CD14-positive monocyte (primary cell): ENCODE measurements at regions of chr16 and their contacts with region 1.

Region 1: GRCh38 chr16:69310653-69311532 is at the start of gene VPS4A:
- DNase-seq: peak; percentile 95 to 97 (median 96)
- H3K4me3 ChIP-seq: peak within 1 kb of the TSS; percentile 66 to 78 (median 78)
- H3K4me3 Mint-ChIP-seq: peak within 1 kb of the TSS; percentile 98 to 100
- H3K27ac ChIP-seq: peak within 1 kb of the TSS; percentile 70 to 93
- H3K27ac Mint-ChIP-seq: peak within 1 kb of the TSS; percentile 88 to 96 (median 95)
- H3K4me1 ChIP-seq: peaks cover 13 to 14% of the 10 kb centered on the region in 2 donors
- H3K4me1 Mint-ChIP-seq: peaks cover 15% of the 10 kb centered on the region
- H3K27me3 ChIP-seq: no peaks in the 10 kb centered on the region
- H3K27me3 Mint-ChIP-seq: peaks cover 1 to 10% (median 5%) of the 10 kb centered on the region in 3 donors
- CTCF ChIP-seq: peak; percentile 82
- polyA plus RNA-seq, gene VPS4A: 18.2 to 25.7 (median 21.8) TPM

Region 2: DNA sequence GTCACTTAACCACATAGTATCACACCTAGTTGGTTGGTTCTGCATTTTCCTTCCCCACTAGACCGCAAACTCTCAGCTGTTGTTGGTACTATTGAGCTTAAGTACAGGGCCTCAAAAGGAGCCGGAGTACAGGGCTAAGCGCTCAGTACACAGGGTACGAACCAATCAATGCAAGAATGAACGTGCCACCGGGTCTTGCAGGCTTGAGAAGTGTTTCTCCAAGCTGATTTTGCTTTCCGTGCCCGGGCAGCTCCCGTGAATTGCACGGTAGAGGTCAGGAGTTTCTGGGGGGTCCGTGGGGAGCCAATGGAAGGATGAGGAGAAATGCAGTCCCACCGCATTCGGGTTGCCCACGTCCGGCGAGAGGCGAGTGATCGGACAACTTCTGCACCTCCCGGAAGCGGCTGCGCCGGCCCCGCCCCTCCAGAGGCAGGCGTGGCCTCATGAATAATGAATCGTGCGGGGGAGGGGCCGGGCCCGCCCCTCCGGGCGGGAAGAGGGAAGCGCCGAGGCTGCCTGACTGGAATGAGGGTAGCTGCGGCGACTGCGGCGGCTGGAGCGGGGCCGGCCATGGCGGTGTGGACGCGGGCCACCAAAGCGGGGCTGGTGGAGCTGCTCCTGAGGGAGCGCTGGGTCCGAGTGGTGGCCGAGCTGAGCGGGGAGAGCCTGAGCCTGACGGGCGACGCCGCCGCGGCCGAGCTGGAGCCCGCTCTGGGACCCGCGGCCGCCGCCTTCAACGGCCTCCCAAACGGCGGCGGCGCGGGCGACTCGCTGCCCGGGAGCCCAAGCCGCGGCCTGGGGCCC is 124.0 kb before region 1 on chr16 and contains the start of gene SNTB2:
- intact Hi-C with region 1: loop called in 1 of 2 experiments (anchors 5 kb)
- DNase-seq: peak; percentile 74 to 87 (median 75)
- H3K4me3 ChIP-seq: peak within 1 kb of the TSS; percentile 65 to 84 (median 75)
- H3K4me3 Mint-ChIP-seq: peak within 1 kb of the TSS; percentile 96 to 98
- H3K27ac ChIP-seq: peak within 1 kb of the TSS; percentile 22 to 80
- H3K27ac Mint-ChIP-seq: peak within 1 kb of the TSS; percentile 89 to 96 (median 93)
- H3K4me1 ChIP-seq: peaks cover 28 to 35% of the 10 kb centered on the region in 2 donors
- H3K4me1 Mint-ChIP-seq: peaks cover 34% of the 10 kb centered on the region
- H3K27me3 ChIP-seq: peaks cover 22 to 34% of the 10 kb centered on the region in 2 donors
- H3K27me3 Mint-ChIP-seq: peaks cover 30 to 67% (median 35%) of the 10 kb centered on the region in 3 donors
- CTCF ChIP-seq: no peak
- polyA plus RNA-seq, gene SNTB2: 1.2 to 6.0 (median 5.0) TPM

Region 3: DNA sequence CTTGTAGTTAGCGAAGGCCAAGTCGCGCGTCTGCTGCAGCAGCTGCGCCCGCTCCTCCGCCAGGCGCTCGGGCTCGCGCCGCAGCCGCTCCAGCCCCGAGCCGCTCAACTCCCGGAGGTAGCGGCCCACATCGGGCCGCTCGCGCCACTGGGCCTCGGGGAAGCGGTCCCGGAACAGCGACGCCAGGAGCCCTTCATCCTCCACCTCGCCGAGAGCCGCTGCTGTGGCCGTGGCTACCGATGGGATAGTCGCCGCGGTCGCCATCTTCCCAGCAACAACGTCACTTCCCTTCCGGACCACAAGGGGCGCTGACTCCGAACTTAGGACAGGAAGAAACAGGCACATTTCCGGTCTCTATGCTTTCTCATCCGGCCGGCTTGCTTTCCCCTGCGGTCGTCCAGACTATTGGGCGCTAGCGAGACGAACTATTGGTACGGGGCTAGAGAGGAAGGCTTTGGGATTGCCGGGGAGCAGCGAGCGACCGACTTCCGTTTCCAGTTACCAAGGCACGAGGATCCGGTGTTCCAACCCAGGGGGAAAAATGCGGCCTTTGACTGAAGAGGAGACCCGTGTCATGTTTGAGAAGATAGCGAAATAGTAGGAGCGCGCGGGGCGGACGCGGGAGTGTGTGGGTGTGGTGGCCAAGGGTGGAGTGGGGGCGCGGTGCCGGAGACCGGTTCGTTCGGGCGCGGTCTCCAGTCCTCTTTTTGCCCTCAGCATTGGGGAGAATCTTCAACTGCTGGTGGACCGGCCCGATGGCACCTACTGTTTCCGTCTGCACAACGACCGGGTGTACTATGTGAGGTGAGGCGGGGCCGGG is 28.6 kb after region 1 on chr16 and contains the starts of genes COG8 and NIP7:
- intact Hi-C with region 1: no loop called
- DNase-seq: peak; percentile 93 to 96 (median 94)
- H3K4me3 ChIP-seq: peak within 1 kb of the TSS; percentile 80 to 93 (median 88)
- H3K4me3 Mint-ChIP-seq: peak within 1 kb of the TSS; percentile 99 to 100
- H3K27ac ChIP-seq: peak within 1 kb of the TSS; percentile 78 to 87
- H3K27ac Mint-ChIP-seq: peak within 1 kb of the TSS; percentile 93 to 99 (median 96)
- H3K4me1 ChIP-seq: peaks cover 20 to 33% of the 10 kb centered on the region in 2 donors
- H3K4me1 Mint-ChIP-seq: peaks cover 25% of the 10 kb centered on the region
- H3K27me3 ChIP-seq: no peaks in the 10 kb centered on the region
- H3K27me3 Mint-ChIP-seq: peaks cover 0 to 3% (median 0%) of the 10 kb centered on the region in 3 donors
- CTCF ChIP-seq: peak; percentile 88
- polyA plus RNA-seq, gene COG8: 11.9 to 24.1 (median 21.6) TPM
- polyA plus RNA-seq, gene NIP7: 3.0 to 16.4 (median 14.2) TPM

Region 4: GRCh38 chr16:69691980-69692911 is 381.4 kb after region 1 on chr16:
- intact Hi-C with region 1: no loop called
- DNase-seq: no peak
- H3K4me3 ChIP-seq: no peak overlapping the region
- H3K4me3 Mint-ChIP-seq: no peak overlapping the region
- H3K27ac ChIP-seq: no peak overlapping the region
- H3K27ac Mint-ChIP-seq: no peak overlapping the region
- H3K4me1 ChIP-seq: no peaks in the 10 kb centered on the region
- H3K4me1 Mint-ChIP-seq: no peaks in the 10 kb centered on the region
- H3K27me3 ChIP-seq: no peaks in the 10 kb centered on the region
- H3K27me3 Mint-ChIP-seq: no peaks in the 10 kb centered on the region
- CTCF ChIP-seq: no peak